Activated T-helper 1 cell treated with anti-CD3 and anti-CD28 coated beads, Interleukin-12 subunit alpha, Interleukin-12 subunit beta, Interleukin-2, Interleukin-4 antibody, amounts not matched to agents 30 ng/mL and 10 ng/mL and 1 ng/mL, durations not matched to agents 14 hours and 24 hours and 36 hours (primary cell): ENCODE measurements at regions of chr7 and their contacts with region 1.

Region 1: GRCh38 chr7:114930829-114931655 is 9.1 kb downstream of the MDFIC start:
- DNase-seq: no peak
- H3K4me3 Mint-ChIP-seq: peak overlapping the region; percentile 75
- H3K27ac Mint-ChIP-seq: no peak overlapping the region
- H3K4me1 Mint-ChIP-seq: peaks cover 36% of the 10 kb centered on the region
- H3K27me3 Mint-ChIP-seq: no peaks in the 10 kb centered on the region

Region 2: DNA sequence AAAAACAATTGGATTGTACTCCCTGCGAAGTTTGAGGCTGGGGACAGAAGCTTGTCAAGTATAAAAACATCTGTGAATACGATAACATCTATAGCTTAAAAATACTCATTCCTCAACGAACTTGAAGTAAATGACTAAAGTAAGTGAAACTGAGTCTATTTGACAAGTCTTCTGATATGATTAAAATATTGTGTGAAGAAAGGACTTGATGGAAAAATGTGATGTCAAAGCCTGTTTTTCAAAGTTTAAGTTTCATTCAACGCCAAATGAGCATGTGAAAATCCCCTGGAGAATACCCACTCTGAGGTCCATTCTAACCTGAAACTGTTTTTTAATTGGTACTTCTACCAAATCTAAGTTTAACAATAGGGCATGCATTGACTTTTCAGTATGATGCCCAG is 131.4 kb before region 1 on chr7:
- intact Hi-C with region 1: loop called (anchors 1 kb)
- DNase-seq: no peak
- H3K4me3 Mint-ChIP-seq: no peak overlapping the region
- H3K27ac Mint-ChIP-seq: peak overlapping the region; percentile 94
- H3K4me1 Mint-ChIP-seq: peaks cover 48% of the 10 kb centered on the region
- H3K27me3 Mint-ChIP-seq: no peaks in the 10 kb centered on the region

Region 3: GRCh38 chr7:114889646-114890285 is 41.3 kb before region 1 on chr7:
- intact Hi-C with region 1: loop called (anchors 1 kb)
- DNase-seq: peak; percentile 6
- H3K4me3 Mint-ChIP-seq: peak overlapping the region; percentile 15
- H3K27ac Mint-ChIP-seq: peak overlapping the region; percentile 89
- H3K4me1 Mint-ChIP-seq: peaks cover 55% of the 10 kb centered on the region
- H3K27me3 Mint-ChIP-seq: no peaks in the 10 kb centered on the region

Region 4: DNA sequence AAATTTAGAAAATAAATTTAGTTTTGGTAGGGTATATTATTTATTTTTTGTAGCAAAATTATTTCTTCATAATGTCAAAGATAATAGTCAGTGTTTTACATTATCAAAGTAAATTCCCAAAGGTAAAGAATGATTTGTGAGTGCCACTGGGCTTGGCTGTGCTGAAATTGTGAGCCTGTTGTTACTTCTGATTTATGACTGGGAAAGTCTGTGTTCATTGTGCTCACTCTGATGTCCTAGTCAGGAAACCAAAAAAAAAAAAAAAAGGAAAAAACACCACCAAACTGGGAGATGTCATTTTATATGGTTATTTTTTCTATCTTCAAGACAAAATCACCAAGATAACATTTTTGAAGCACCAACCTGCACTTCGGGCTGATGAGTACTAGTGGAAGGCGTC is 35.1 kb after region 1 on chr7:
- intact Hi-C with region 1: loop called (anchors 5 kb)
- DNase-seq: no peak
- H3K4me3 Mint-ChIP-seq: no peak overlapping the region
- H3K27ac Mint-ChIP-seq: no peak overlapping the region
- H3K4me1 Mint-ChIP-seq: peaks cover 49% of the 10 kb centered on the region
- H3K27me3 Mint-ChIP-seq: no peaks in the 10 kb centered on the region

Region 5: GRCh38 chr7:115435178-115435577 is 504.1 kb after region 1 on chr7:
- intact Hi-C with region 1: no loop called
- DNase-seq: no peak
- H3K4me3 Mint-ChIP-seq: no peak overlapping the region
- H3K27ac Mint-ChIP-seq: no peak overlapping the region
- H3K4me1 Mint-ChIP-seq: no peaks in the 10 kb centered on the region
- H3K27me3 Mint-ChIP-seq: peaks cover 2% of the 10 kb centered on the region